PC-9 (cell line): ENCODE measurements at regions of chr16 and their contacts with region 1.

Region 1: DNA sequence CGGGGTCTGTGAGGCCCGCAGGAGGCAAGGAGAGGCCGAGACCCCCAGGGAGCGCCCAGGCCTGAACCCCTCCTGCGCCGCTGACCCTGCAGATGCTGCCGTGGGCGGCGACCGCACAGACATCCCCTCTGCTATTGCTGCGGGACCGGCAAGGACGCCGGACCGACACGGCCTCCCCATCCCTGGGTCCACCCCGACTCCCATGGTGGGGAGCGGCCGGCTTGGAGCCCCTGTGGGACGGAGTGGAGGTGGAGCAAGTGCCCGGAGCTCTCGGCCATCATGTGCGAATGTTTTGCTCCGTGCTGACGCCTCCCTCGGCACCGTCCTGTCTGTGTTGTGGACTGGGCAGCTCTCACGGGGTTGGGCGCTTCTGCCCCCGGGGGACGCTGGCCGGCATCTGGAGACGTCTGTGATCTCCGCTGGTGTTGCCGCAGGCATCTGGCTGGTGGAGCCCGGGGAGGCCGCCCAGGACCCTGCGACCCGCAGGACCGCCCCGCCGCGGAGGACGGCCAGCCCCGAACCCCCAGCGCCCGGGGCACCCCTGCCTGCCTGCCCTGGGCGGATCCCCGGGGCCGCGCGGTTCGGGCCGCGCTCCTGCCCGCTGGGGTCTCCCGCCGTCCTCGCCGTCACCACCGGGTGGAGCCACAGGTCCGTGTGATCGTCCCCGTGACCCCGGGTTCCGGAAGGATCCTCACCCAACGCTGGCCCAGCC is 12.8 kb upstream of the GNG13 start:
- DNase-seq: peak in 1 of 2 experiments; percentile 40
- H3K4me3 ChIP-seq: no peak overlapping the region
- H3K27ac ChIP-seq: no peak overlapping the region
- H3K4me1 ChIP-seq: peaks cover 16% of the 10 kb centered on the region
- H3K27me3 ChIP-seq: peaks cover 4% of the 10 kb centered on the region; the same call in 1 of the 2 replicates
- CTCF ChIP-seq: 0 out of 2 replicates have a peak, but pooled peaks have one; percentile 26

Region 2: GRCh38 chr16:401468-402348 is 411.7 kb before region 1 on chr16 and contains the start of gene DECR2:
- CTCF ChIA-PET with region 1: no interaction called
- POLR2A ChIA-PET with region 1: no interaction called
- intact Hi-C with region 1: no loop called
- DNase-seq: peak; percentile 67 to 96
- H3K4me3 ChIP-seq: peak within 1 kb of the TSS; percentile 99
- H3K27ac ChIP-seq: peak within 1 kb of the TSS; percentile 67
- H3K4me1 ChIP-seq: peaks cover 13% of the 10 kb centered on the region
- H3K27me3 ChIP-seq: no peaks in the 10 kb centered on the region
- CTCF ChIP-seq: no peak; the same call in 1 of the 2 replicates
- total RNA-seq, gene DECR2: 65.4 and 78.4 TPM in 2 replicates

Region 3: DNA sequence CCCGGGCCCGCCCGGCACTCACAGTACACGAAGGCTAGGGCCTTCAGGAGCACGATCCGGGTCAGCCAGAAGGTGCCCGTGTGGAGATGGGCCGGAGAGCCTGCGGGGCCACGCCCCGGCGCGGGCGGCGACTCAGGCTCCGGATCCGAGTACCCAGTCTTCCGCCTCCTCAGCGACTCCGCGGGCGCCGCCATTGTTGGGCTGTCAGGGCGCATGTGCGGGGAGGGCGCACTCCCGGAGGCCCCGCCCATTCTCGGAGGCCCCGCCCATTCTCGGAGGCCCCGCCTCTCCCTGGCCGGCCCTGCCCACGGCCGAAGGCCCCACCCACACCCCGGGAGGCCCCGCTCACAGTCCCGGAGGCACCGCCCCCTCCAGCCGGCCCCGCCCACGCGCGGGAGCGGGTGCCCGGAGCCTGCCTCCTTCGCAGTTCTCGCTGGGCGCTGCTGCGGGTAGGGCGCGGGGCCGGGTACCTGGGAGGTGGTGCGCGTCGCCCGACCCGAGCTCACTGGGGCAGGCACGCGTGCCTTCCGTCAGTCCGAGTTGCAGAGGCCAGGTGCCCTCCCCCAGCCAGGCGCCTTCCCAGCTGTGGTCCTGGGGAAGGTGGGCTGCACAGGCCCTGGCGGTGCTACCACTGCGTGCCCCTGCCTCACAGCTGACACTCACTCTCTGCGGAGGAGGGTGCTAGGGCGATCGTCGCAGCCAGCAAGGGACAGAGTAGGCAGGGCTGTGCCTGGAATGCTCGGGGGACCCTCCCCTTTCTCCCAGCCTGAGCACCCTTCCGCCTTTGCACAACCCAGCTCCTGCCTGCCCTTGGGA is 157.6 kb after region 1 on chr16 and contains the start of gene LMF1:
- CTCF ChIA-PET with region 1: no interaction called
- POLR2A ChIA-PET with region 1: no interaction called
- intact Hi-C with region 1: loop called (anchors 10 kb)
- DNase-seq: peak; percentile 67 to 99
- H3K4me3 ChIP-seq: peak within 1 kb of the TSS; percentile 85
- H3K27ac ChIP-seq: peak within 1 kb of the TSS; percentile 30; the same call in 1 of the 2 replicates
- H3K4me1 ChIP-seq: peaks cover 12% of the 10 kb centered on the region
- H3K27me3 ChIP-seq: peaks cover 33% of the 10 kb centered on the region
- CTCF ChIP-seq: no peak
- total RNA-seq, gene LMF1: 31.3 and 35.6 TPM in 2 replicates

Region 4: GRCh38 chr16:1054660-1055556 is 241.5 kb after region 1 on chr16:
- CTCF ChIA-PET with region 1: no interaction called
- POLR2A ChIA-PET with region 1: no interaction called
- intact Hi-C with region 1: loop called (anchors 2 kb)
- DNase-seq: peak in 1 of 2 experiments; percentile 69
- H3K4me3 ChIP-seq: no peak overlapping the region
- H3K27ac ChIP-seq: no peak overlapping the region
- H3K4me1 ChIP-seq: no peaks in the 10 kb centered on the region
- H3K27me3 ChIP-seq: peaks cover 54% of the 10 kb centered on the region
- CTCF ChIP-seq: peak; percentile 90

Region 5: DNA sequence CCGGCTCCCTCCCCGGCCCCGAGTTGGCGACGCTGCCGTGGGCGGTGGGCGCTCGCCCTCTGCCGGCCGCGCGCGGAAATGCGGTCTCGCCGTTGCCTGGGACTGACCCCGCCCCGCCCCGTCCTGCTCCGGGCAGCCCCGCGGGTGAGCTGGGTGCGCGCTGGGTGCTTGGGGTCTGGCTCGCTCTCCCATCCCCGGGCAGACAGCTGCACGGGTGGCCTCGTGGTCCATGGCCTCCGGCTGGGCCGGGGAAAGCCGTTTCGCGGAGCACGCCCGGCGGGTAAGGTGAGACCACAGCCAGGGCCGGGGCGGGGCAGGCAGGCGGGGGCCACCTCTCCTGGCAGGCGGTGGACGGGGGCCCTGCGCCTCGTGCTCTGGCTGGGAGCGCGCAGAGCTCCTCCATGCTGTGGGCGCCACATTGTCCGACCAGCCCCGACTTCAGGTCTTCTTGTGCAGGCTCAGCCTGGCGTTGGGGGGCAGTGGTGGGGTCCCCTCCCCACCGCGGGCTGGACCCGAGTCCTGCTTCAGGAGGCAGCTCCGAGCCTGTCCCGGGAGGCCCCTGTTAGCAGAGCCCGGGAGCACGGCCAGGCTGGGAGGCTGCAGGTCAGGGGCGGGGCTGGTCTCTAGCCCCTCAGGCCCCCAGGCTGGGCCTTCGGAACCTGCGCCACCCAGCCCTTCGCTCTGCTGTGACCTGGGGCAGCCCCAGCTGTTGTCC is 289.7 kb after region 1 on chr16:
- CTCF ChIA-PET with region 1: interaction called, 10 read pairs
- POLR2A ChIA-PET with region 1: no interaction called
- intact Hi-C with region 1: loop called (anchors 2 kb)
- DNase-seq: peak in 1 of 2 experiments; percentile 79
- H3K4me3 ChIP-seq: no peak overlapping the region
- H3K27ac ChIP-seq: no peak overlapping the region
- H3K4me1 ChIP-seq: no peaks in the 10 kb centered on the region
- H3K27me3 ChIP-seq: peaks cover 49% of the 10 kb centered on the region
- CTCF ChIP-seq: peak; percentile 67

Region 6: DNA sequence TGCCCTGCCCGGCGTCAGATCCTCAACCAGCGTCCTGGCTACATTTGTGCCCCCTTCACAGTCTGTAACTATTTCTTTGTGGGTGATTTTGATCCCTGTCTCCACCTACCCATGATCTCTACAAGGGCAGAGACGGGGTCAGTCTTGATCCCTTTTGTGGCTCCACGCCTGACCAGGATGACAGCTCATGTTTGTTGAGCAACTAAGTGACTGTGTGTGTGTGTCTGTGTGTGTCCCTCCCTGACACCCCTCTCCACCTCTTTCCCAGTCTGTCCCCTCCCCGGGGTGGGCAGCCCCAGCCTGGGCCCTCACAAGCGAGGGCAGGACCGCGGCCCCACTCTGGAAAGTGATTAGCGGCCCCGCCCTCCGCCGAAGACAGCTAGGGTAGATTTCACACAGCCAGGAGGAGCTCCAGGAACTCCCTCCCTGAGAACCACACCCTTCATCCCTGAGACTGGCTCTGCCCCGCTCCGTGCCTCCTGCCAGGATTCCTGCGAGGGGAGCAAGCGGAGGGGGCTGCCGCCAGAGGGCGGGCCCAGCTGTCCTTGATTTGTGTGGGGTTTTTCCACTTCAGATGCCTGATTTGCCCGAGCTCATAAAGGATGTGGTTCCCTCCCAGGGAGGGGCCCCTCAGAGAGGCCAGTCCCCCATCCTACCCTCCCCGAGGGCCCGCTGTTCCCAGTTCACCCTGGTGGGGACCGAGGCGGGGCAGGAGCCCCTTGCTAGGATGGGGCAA is 1110.1 kb after region 1 on chr16:
- CTCF ChIA-PET with region 1: no interaction called
- POLR2A ChIA-PET with region 1: interaction called, 12 read pairs
- intact Hi-C with region 1: no loop called
- DNase-seq: peak; percentile 70 to 71
- H3K4me3 ChIP-seq: no peak overlapping the region
- H3K27ac ChIP-seq: no peak overlapping the region
- H3K4me1 ChIP-seq: peaks cover 16% of the 10 kb centered on the region
- H3K27me3 ChIP-seq: peaks cover 30% of the 10 kb centered on the region; the same call in 1 of the 2 replicates
- CTCF ChIP-seq: peak; percentile 42; the same call in 1 of the 2 replicates